ENCODE measurements at regions of chr9 and their contacts with region 1.

Region 1: DNA sequence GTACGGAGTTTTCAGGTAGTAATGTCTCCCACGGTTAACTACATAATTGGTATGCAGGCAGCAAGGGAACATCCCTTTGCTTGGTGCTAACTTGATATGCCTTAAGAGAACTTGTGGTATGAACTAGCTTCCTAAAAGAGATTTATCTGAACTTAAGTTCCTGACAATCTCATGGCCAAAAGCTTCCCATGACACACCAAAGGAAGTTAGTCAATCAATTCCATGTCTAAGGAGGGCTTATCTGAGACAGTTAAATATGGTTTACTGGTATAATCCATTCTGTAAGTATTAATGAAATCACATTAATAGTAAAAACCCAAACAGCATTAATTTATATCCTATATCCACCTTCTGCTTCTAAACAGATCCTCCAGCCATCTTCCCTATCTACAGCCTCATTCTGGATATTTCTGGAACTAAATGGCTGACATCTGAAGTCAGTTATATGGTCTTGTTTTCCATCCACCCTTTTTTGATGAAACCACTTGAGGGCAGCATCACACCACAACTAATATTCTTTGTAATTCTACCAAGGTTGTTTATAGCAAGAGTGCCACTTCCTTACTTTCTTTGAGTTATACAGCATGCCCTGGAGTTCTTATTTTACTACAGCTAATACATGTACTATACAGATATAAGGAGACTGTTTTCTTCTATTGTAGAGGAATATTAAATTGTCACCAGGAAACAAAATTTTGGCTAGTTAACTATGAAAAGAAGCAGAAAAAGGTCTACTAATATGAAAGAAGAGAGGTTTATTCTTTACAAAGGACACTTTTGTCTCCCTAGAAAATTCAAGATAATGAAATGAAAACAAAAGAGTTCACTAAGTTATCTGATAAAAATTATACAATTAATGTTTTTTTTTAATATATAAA is 34.7 kb downstream of the SHOC1 start:
- DNase-seq: peak; percentile 23 to 28
- ATAC-seq: peak; percentile 98

Region 2: GRCh38 chr9:111463048-111463447 is 297.0 kb before region 1 on chr9:
- intact Hi-C with region 1: no loop called
- DNase-seq: no peak
- ATAC-seq: no peak

Region 3: DNA sequence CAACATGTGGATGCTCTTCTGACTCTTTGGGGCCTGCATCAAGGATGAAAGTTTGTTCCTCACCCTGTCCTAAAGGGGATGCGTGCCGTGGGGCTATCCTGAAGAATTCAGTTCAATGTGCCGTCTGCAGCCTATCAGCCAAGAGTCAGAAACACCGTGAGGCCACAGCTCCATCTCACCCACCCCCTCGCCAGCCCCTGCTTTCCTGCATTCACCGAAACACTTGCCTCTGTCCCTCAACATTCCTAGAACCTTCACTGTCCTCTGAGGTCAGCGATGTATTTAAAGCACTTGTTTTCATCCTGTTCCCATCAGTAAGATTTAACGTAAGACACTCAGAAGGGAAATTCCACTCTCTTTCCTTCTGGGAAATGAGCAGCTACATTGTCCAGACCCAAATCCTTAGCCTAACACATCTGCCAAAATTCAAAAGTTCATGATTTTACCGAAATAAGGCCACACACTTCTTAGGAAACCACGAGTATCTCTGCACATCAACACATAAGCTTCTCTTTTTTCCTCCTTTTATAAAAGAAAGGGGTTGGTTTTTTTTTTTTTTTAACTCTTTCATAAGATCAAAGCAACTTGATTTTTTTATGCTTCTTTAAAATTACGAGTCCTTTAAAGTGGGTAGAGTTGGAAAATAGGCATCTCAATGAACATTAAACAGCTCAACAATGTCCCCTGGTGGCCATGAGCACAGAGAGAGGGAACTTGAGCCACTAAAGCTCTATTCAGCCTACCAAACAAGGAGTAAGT is 314.4 kb after region 1 on chr9:
- intact Hi-C with region 1: loop called in 1 of 2 experiments (anchors 2 kb)
- DNase-seq: peak; percentile 58 to 80
- ATAC-seq: peak; percentile 83

Measured in left colon (tissue), 2 donors.